H1 (cell line): ENCODE measurements at regions of chr10 and their contacts with region 1.

Region 1: DNA sequence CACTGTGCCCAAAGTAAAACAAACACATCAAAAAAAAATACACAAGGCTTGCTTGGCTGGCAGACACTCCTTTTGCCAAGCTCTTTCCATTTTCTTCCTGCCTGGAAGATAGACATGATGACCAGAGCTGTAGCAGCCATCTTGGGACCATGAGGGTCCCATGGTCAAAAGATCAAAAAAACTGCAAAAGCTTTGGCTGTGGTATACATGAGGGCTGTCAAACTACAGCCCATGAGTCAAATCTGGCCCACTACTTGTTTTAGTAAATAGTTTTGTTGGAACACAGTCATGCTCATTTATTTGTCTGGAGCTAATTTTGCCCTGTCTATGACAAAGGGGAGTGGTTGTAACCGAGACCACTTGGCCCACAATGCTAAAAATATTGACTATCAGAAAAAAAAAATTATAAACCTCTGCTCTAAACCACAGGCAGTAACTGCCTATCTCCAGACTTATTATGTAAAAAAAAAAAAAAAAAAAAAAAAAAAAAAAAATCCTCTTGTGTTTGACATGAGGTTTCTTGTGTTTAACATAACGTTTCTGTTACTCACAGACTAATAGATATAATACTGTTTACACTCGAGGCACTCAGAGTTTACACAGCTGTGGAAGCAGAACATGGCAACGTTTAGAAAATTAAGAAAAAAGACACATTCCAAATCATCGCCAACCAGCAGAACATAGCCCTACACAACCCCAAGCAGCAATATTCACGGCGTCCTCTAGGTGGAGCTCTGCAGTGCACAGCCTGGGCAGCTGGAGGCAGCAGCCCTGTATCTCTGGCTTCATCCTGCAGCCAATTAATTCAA is 36.9 kb downstream of the ASB13 start:
- DNase-seq: peak; percentile 33 to 95
- H3K4me3 ChIP-seq: no peak overlapping the region
- H3K27ac ChIP-seq: no peak overlapping the region
- H3K4me1 ChIP-seq: peaks cover 0 to 5% (median 0%) of the 10 kb centered on the region in 4 experiments; a peak in 2 of 7 replicates
- H3K27me3 ChIP-seq: no peaks in the 10 kb centered on the region
- CTCF ChIP-seq: peak; percentile 85 to 99 (median 94)
- EP300 ChIP-seq: no peak
- POLR2A ChIP-seq: no peak
- RAD21 ChIP-seq: peak; percentile 57 to 78

Region 2: DNA sequence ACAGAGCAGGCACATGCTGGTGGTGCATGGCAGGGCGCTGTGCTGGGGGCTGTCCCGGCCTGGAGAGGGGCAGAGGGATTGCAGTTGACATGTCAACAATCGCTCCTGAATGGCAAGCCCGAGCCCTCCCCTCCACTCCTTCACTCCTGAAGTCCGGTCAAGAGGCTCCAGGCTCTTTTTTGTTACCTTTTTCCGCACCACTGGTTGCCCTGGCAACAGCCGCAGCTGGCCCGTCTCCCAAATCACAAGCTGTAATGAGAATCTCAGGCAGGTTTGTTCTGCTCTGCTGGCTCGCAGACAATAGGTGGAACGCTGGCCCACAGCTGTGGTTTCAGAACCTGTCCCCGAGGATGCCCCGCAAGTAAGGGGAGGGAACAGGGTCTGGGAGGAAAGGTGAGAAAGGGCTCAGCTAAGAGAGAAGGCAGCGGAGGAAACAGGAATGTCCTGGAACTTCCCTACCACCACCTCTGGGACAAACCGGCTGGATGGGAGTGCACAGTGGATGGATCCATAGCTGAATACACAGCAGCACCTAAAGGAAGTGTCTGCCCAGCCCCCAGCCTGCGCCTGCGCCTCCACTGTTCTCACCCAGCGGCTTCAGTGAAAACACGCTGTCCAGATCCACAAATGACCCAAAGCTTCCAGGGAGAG is 45.9 kb before region 1 on chr10:
- CTCF ChIA-PET with region 1: interaction called, 12 read pairs
- POLR2A ChIA-PET with region 1: no interaction called
- DNase-seq: peak in 1 of 2 experiments; percentile 67
- H3K4me3 ChIP-seq: no peak overlapping the region; a peak in 1 of 8 replicates
- H3K27ac ChIP-seq: no peak overlapping the region
- H3K4me1 ChIP-seq: peaks cover 0 to 21% (median 13%) of the 10 kb centered on the region in 4 experiments; a peak in 6 of 7 replicates
- H3K27me3 ChIP-seq: no peaks in the 10 kb centered on the region; a peak in 2 of 7 replicates
- CTCF ChIP-seq: no peak
- EP300 ChIP-seq: no peak
- POLR2A ChIP-seq: no peak
- RAD21 ChIP-seq: no peak

Region 3: GRCh38 chr10:5595591-5596590 is 33.6 kb before region 1 on chr10:
- CTCF ChIA-PET with region 1: interaction called, 16 read pairs
- POLR2A ChIA-PET with region 1: no interaction called
- DNase-seq: no peak
- H3K4me3 ChIP-seq: no peak overlapping the region
- H3K27ac ChIP-seq: no peak overlapping the region
- H3K4me1 ChIP-seq: peaks cover 1 to 7% (median 4%) of the 10 kb centered on the region in 4 experiments; a peak in 5 of 7 replicates
- H3K27me3 ChIP-seq: no peaks in the 10 kb centered on the region
- CTCF ChIP-seq: no peak
- EP300 ChIP-seq: no peak
- POLR2A ChIP-seq: no peak
- RAD21 ChIP-seq: no peak

Region 4: DNA sequence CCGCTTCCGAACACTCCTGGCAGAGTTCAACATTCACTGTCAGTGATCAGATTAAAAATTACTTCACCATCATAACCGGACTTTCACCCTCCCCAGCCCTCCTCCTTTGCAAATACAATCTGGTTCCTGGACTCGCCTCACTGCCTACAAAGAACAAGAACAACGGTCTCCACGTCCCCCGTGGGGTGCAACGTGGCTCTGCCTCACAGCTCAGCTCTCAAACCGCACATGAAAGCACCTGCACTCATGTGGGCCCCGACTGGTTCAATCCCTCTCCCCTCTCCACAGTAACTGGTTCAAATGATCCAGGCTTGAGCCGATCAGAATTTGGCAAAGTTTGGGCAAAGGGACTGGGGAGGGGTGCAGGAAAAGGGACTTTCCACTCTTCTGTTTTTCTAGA is 15.9 kb after region 1 on chr10:
- CTCF ChIA-PET with region 1: interaction called, 41 read pairs
- POLR2A ChIA-PET with region 1: no interaction called
- DNase-seq: no peak
- H3K4me3 ChIP-seq: no peak overlapping the region
- H3K27ac ChIP-seq: no peak overlapping the region
- H3K4me1 ChIP-seq: no peaks in the 10 kb centered on the region; a peak in 1 of 7 replicates
- H3K27me3 ChIP-seq: no peaks in the 10 kb centered on the region
- CTCF ChIP-seq: no peak
- EP300 ChIP-seq: no peak
- POLR2A ChIP-seq: no peak
- RAD21 ChIP-seq: no peak

Region 5: DNA sequence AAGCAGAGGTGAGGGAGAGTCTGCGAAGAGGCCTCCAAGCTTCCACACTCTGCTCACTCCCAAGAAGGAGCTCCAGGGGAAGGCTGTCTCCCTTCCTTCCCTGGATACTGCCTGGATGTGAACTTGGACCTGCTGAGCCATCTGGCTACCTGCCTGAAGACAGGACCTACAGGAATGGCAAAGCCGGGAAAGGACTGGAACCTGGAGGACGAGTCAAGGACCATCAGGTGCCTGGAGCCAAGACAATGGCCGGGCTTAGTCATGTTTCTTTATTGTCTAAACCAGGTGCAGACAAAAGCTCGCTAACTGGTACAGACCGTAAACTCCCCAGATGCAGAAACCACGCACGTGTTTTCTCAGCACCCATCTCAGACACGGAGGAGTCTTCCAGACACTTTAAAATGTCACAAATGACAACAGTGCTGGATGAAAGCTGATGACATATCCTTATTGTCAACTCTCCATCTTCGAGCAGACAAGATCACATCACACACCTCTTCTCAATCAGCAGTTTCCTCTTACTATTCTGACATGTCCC is 24.8 kb after region 1 on chr10:
- CTCF ChIA-PET with region 1: interaction called, 10 read pairs
- POLR2A ChIA-PET with region 1: no interaction called
- DNase-seq: no peak
- H3K4me3 ChIP-seq: no peak overlapping the region
- H3K27ac ChIP-seq: no peak overlapping the region
- H3K4me1 ChIP-seq: peaks cover 0 to 11% (median 7%) of the 10 kb centered on the region in 4 experiments; a peak in 6 of 7 replicates
- H3K27me3 ChIP-seq: 0 out of 7 replicates have a peak, but pooled peaks cover 0 to under 1% (median 0%) of the 10 kb centered on the region in 4 experiments
- CTCF ChIP-seq: no peak
- EP300 ChIP-seq: no peak
- POLR2A ChIP-seq: no peak
- RAD21 ChIP-seq: no peak

Region 6: GRCh38 chr10:5948999-5949759 is 319.7 kb after region 1 on chr10:
- CTCF ChIA-PET with region 1: no interaction called
- POLR2A ChIA-PET with region 1: no interaction called
- DNase-seq: peak; percentile 38 to 80
- H3K4me3 ChIP-seq: no peak overlapping the region
- H3K27ac ChIP-seq: no peak overlapping the region
- H3K4me1 ChIP-seq: peaks cover 0 to 9% (median 5%) of the 10 kb centered on the region in 4 experiments; a peak in 6 of 7 replicates
- H3K27me3 ChIP-seq: no peaks in the 10 kb centered on the region
- CTCF ChIP-seq: peak; percentile 82 to 92 (median 86)
- EP300 ChIP-seq: no peak
- POLR2A ChIP-seq: no peak
- RAD21 ChIP-seq: peak; percentile 95 to 97